Thyroid gland (tissue), 4 donors: ENCODE measurements at regions of chr17 and their contacts with region 1.

Region 1: DNA sequence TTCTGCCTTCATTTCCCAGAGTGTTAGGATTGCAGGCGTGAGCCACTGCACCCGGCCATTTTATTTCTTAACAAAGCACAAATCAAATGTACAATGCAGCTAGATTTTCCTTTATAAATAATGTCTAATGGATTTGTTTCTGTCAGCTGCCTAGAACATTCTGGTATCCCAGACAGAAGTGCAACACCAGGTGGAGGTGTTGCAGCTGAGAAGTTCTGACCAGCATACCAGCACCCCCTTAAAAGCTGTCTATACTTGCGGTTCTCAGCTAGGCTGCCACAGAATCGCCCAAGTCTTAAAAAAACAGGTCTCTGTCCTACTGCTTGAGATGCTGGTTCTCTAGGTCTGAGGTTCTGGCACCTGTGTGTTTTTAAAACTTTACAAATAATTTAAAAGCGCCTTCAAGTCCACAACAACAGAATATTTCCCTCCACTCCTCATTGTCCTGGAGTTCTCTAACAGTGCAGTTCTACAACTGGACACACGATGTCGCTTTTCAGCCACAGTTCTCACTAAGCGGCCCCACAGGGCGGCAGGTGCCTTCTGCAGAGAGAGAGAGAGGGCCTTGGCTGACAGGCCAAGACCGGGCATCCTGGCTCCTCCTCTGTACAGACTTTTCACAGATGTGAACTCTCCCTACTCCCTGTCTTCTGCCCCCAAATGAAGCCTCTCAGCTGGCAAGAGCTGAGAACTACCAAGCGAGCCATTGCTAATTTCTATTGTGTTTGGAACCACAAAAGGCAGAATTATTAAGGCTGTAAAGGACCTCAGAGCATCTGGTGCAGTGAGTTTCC is 32.6 kb upstream of the MEOX1 start:
- DNase-seq: peak; percentile 79 to 84
- H3K4me3 ChIP-seq: no peak overlapping the region
- H3K27ac ChIP-seq: no peak overlapping the region
- H3K4me1 ChIP-seq: peaks cover 0 to 6% of the 10 kb centered on the region in 2 donors
- H3K27me3 ChIP-seq: no peaks in the 10 kb centered on the region
- CTCF ChIP-seq: peak; percentile 89 to 94 (median 92)
- POLR2A ChIP-seq: no peak

Region 2: DNA sequence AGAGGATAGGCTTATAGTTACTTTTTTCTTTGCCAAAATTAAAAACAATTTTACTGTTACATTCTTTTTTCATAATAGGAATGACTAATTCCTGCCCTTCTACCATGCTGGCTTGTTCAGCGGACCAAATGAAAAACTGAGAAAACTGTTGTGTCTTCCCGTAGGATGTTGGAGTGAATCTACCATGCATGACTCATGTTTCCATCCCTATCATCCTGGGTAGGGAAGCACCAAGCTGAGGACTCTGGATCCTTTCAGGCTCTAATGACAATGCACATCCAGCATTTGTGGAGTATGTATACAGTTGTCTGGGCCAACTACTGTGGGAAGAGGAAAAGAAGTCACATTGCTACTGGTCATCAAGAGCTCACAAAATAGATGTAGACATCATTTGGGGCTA is 251.6 kb before region 1 on chr17:
- intact Hi-C with region 1: no loop called
- DNase-seq: no peak
- H3K4me3 ChIP-seq: no peak overlapping the region
- H3K27ac ChIP-seq: peak overlapping the region in 2 of 3 donors; percentile 4 to 92
- H3K4me1 ChIP-seq: peaks cover 26 to 34% of the 10 kb centered on the region in 2 donors
- H3K27me3 ChIP-seq: no peaks in the 10 kb centered on the region
- CTCF ChIP-seq: no peak
- POLR2A ChIP-seq: no peak

Region 3: DNA sequence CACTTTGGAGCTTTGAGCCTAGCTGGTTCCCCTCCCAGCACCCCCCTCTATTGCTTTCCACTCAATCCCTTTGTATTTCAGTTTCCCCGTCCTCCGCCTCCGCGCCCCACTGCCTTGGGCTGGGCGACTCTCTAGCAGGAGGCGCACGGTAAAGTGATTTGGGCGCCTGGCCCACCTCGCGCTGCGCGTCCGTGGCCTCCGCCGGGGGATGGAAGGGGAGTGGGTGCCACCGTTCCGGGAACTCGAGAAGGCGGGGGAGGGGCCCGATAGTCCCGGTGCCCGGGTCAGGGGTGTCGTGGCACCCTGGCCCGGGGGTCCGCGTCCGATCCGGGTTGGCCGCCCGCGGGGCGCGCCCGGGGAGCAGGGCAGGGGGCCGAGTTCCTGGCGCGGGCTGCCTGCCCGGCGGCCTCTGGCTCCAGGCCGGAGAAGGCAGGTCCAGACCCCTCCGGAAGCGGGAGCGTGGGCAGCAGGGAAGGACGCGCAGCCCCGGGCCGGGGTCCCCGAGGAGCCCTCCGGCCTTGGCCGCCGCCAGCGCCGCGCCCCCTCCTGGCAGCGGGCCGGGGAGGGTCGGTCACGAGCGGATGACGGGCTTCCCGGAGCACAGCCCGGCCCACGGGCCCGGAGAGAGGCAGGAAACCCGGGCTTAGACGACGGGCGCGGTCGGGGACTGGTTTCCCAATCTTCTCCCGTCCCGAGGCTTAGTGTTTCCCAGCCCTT is 48.4 kb before region 1 on chr17:
- intact Hi-C with region 1: no loop called
- DNase-seq: peak; percentile 55 to 57
- H3K4me3 ChIP-seq: peak overlapping the region in 2 of 3 donors; percentile 44 to 52
- H3K27ac ChIP-seq: peak overlapping the region; percentile 66 to 87 (median 68)
- H3K4me1 ChIP-seq: peaks cover 0 to 10% of the 10 kb centered on the region in 2 donors
- H3K27me3 ChIP-seq: no peaks in the 10 kb centered on the region
- CTCF ChIP-seq: peak in 2 of 6 experiments; percentile 10 to 13
- POLR2A ChIP-seq: no peak

Region 4: DNA sequence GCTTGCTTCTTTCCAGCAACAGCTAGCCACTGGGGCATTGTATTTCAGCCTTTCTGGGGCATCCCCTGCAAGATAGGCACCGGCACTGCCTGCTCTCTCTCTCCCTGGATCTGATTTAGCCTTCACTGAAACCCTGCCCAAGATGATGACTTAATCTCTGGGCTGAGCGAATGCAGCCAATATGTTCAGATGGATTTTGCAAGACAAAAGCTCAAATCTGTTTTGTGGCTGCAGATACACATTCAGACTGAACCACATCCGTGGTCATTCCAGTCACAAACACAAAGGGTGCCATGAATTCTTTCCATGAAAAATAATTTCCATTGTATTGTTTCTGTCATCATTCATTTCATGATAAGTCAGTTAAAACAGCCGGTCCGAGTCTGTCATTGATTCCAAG is 40.1 kb after region 1 on chr17:
- intact Hi-C with region 1: no loop called
- DNase-seq: no peak
- H3K4me3 ChIP-seq: no peak overlapping the region
- H3K27ac ChIP-seq: no peak overlapping the region
- H3K4me1 ChIP-seq: no peaks in the 10 kb centered on the region
- H3K27me3 ChIP-seq: no peaks in the 10 kb centered on the region
- CTCF ChIP-seq: no peak
- POLR2A ChIP-seq: no peak

Region 5: DNA sequence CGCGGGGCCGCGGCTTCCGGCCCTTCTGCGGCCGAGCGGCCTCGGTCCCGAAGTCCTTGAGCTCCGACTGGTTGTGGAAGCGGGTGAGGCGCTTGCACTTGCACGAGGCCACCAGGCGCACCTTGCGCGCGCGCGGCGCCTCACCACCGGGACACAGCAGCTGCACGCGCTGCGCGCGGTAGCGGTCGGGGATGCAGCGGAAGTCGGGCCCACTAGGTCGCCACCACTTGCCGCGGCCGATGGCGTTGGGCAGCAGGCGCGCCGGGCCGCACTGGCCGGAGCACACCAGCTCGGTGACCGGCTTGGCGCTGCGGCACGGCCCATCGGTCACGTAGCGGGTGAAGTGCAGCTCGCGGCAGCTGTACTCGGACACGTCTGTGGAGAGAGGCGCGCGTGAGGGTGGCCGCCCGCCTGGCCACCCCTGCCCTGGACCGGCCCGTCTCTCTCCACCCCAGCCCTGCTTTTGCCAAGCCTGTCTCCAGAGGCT is 61.2 kb after region 1 on chr17:
- intact Hi-C with region 1: loop called (anchors 2 kb)
- DNase-seq: peak; percentile 39 to 44
- H3K4me3 ChIP-seq: peak overlapping the region in 1 of 3 donors; percentile 5
- H3K27ac ChIP-seq: no peak overlapping the region
- H3K4me1 ChIP-seq: peaks cover 10% of the 10 kb centered on the region in 2 donors
- H3K27me3 ChIP-seq: no peaks in the 10 kb centered on the region
- CTCF ChIP-seq: no peak
- POLR2A ChIP-seq: no peak

Region 6: GRCh38 chr17:43857942-43858600 is 163.8 kb after region 1 on chr17:
- intact Hi-C with region 1: loop called (anchors 10 kb)
- DNase-seq: no peak
- H3K4me3 ChIP-seq: no peak overlapping the region
- H3K27ac ChIP-seq: no peak overlapping the region
- H3K4me1 ChIP-seq: peaks cover 0 to 9% of the 10 kb centered on the region in 2 donors
- H3K27me3 ChIP-seq: no peaks in the 10 kb centered on the region
- CTCF ChIP-seq: no peak
- POLR2A ChIP-seq: no peak